ENCODE measurements at regions of chr14 and their contacts with region 1.

Region 1: DNA sequence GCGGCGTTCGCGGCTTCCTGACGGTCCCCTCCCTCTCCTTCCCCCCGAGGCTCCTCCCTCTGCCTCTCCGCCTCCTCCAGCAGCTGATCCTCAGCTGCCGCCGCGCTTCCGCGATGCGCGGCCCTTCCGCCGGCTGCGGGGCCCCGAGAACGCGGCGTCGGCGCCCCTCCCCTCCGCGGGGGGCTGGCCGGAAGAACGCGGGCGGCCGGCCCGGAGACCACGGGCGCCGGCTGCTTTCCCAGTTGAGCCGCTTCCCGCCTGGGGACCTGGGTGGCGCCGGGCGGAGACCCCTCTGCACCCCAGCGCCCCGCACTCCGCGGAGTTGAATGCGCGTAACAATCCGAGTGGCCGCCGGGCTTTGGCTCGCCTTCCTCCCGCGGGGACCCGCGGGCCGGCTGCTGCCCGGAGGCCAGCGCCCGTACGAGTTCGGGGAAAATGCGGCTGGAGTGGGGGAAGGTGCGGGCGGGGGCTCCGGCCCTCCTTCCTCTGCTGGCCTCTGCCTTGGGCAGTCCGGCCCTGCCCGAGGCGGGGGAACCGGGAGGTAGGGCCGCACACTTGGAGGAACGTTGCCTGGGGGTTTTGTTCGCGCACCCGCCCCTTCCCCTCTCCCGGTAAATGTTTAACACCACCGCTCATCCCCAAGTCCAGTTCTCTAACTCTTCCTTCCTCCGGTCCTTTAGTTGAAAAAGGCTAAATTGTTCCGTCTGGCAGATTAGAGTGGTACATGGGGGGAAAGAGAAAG is 383 bp upstream of the DCAF5 start:
- DNase-seq: peak; percentile 76 to 96 (median 91)
- ATAC-seq: peak; percentile 94
- H3K4me3 ChIP-seq: peak overlapping the region; percentile 83
- H3K4me3 Mint-ChIP-seq: peak overlapping the region; percentile 89 to 100 (median 97)
- H3K27ac ChIP-seq: peak overlapping the region; percentile 90
- H3K27ac Mint-ChIP-seq: peak overlapping the region; percentile 84 to 98 (median 93)
- H3K4me1 ChIP-seq: peaks cover 11 to 12% of the 10 kb centered on the region in 2 donors
- H3K4me1 Mint-ChIP-seq: peaks cover 30 to 37% (median 36%) of the 10 kb centered on the region in 7 donors
- H3K27me3 ChIP-seq: no peaks in the 10 kb centered on the region
- H3K27me3 Mint-ChIP-seq: peaks cover 0 to 36% (median 0%) of the 10 kb centered on the region in 5 donors

Region 2: DNA sequence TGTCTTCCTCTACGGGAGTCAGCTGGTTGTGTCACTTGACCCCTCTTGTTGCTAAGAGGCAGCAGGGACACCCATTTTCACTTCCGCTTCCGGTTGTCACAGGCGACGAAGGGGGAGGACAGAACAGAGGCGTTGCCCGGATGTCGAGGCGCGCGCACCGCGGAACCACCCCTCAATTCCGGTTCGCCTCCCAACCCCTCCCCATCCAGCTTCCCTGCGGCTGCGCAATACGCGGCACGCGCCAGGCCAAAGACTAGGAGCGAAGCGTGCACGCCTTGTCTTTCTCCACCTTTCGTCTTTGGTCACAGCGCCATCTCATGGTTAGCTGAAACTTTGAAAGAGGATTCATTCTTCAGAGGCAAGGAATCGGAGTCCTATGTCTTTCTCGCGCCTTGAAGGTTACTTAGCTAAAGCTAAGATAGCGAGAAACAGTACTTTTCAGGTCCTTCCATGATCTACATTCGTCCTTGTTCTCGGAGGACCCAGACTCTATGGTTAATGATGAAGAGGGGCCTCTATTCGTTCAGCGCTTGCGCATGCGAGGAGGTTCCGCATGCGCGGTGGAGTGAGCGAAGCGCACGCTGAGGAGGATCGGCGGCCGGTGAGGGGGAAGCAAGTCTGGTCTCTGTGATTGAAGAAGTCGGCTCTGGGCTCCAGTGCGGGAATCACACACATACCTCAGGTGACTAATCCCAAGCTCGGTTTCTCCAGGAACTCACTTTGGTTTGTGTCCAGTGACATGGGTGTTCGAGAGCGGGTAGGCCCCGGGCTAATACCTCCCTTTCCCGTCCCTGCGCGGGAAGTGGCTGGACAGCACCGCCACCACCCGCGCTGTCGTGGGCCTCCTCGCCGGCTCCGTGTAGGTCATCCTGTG is 1793.3 kb before region 1 on chr14 and contains the starts of genes ATP6V1D and EIF2S1:
- CTCF ChIA-PET with region 1: no interaction called
- POLR2A ChIA-PET with region 1: no interaction called
- intact Hi-C with region 1: loop called in 1 of 2 experiments (anchors 2 kb)
- DNase-seq: peak; percentile 97 to 100 (median 100)
- ATAC-seq: peak; percentile 94
- H3K4me3 ChIP-seq: peak within 1 kb of the TSS; percentile 87
- H3K4me3 Mint-ChIP-seq: peak within 1 kb of the TSS; percentile 93 to 99 (median 98)
- H3K27ac ChIP-seq: peak within 1 kb of the TSS; percentile 82
- H3K27ac Mint-ChIP-seq: peak within 1 kb of the TSS; percentile 94 to 99 (median 96)
- H3K4me1 ChIP-seq: peaks cover 24 to 38% of the 10 kb centered on the region in 2 donors
- H3K4me1 Mint-ChIP-seq: peaks cover 43 to 94% (median 85%) of the 10 kb centered on the region in 7 donors
- H3K27me3 ChIP-seq: no peaks in the 10 kb centered on the region
- H3K27me3 Mint-ChIP-seq: peaks cover 0 to 5% (median 0%) of the 10 kb centered on the region in 5 donors
- total RNA-seq, gene ATP6V1D: 28.5 to 41.5 (median 33.4) TPM
- total RNA-seq, gene EIF2S1: 41.4 to 115 (median 49.4) TPM

Region 3: DNA sequence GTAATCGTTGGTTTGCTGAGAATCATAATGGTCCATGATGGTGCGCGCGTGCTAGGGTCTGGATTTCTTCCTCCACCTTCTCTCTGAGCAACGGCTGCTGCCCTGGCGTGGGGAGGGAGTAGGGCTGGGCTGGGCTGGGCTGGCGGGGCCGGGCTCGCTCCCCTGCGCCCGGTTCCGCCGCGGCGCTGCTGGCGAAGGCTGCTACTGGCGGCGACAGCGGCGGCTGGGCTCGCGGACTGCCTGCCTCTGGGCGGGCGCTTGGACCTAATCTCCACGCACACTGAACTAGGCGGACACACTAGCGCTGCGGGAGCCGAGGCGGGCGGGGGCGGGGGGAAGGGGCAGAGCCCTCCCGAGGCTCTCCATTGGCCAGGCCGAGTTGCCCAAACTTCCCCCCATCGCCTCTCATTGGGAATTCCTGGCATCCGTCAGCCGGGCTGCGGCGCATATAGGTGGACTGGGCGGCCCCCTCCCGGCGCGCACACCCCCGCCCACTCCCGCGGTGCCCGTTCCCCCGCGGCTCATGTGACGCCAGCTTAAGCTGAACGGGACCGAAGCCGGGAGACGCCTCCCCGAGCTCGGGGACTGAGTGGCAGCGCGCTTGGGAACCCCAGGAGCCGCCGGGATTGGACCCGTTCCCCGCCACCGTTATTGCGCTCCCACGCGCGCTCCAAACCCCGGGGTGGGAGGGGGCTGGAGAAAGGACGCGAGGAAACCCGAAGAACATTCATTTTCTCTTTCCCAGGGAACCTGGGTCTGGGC is 174.1 kb before region 1 on chr14 and contains the start of gene ACTN1:
- CTCF ChIA-PET with region 1: no interaction called
- POLR2A ChIA-PET with region 1: no interaction called
- intact Hi-C with region 1: loop called (anchors 5 kb)
- DNase-seq: peak; percentile 46 to 74 (median 70)
- ATAC-seq: peak; percentile 81
- H3K4me3 ChIP-seq: peak within 1 kb of the TSS; percentile 83
- H3K4me3 Mint-ChIP-seq: peak within 1 kb of the TSS; percentile 75 to 98 (median 94)
- H3K27ac ChIP-seq: peak within 1 kb of the TSS; percentile 87
- H3K27ac Mint-ChIP-seq: peak within 1 kb of the TSS; percentile 81 to 100 (median 98)
- H3K4me1 ChIP-seq: peaks cover 5 to 33% of the 10 kb centered on the region in 2 donors
- H3K4me1 Mint-ChIP-seq: peaks cover 29 to 59% (median 47%) of the 10 kb centered on the region in 7 donors
- H3K27me3 ChIP-seq: no peaks in the 10 kb centered on the region
- H3K27me3 Mint-ChIP-seq: peaks cover 0 to 36% (median 0%) of the 10 kb centered on the region in 5 donors
- total RNA-seq, gene ACTN1: 41.3 to 249 (median 227) TPM

Region 4: DNA sequence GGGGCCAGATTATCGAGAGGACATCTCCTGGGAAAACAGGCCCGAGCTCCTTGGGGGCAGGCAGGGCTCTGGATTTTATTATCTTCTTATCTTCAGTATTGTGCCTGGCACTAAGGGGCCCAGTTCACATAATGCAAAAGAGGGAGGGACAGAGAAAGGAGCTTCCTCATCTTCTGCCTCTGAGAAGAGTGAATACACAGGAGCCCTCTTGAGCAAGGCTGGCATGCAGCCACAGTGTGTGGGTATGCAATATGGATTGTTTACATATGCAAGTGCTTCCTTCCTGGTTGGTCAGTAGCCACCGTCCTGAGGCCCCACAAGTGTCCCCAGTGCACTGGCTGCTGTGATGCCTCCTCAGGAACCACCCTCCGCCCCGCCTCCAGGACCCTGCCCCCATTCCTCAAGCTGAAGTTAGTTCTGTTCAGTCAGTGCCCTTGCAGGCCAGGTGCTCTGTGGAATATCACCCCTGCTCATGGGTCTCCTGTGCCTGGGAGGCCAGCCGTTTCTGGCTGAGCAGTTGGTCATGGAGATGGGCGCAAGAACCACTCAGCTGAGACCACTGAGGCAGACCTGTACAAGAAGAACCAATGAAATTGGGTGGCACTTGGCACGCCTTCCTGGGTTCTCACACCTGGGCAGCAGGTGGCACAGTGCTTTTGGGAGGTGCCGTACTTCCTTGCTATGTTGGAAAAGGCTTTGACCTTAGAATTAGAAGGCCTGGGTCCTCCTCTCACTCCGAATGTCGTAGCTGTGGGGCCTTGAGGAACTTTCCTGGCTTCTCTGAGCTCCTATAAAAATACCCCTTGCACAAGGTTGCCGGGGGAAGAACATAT is 139.1 kb before region 1 on chr14:
- CTCF ChIA-PET with region 1: no interaction called
- POLR2A ChIA-PET with region 1: no interaction called
- intact Hi-C with region 1: no loop called
- DNase-seq: no peak
- ATAC-seq: peak; percentile 90
- H3K4me3 ChIP-seq: no peak overlapping the region
- H3K4me3 Mint-ChIP-seq: no peak overlapping the region
- H3K27ac ChIP-seq: no peak overlapping the region
- H3K27ac Mint-ChIP-seq: no peak overlapping the region
- H3K4me1 ChIP-seq: peaks cover 0 to 3% of the 10 kb centered on the region in 2 donors
- H3K4me1 Mint-ChIP-seq: peaks cover 0 to 16% (median 12%) of the 10 kb centered on the region in 7 donors
- H3K27me3 ChIP-seq: no peaks in the 10 kb centered on the region
- H3K27me3 Mint-ChIP-seq: peaks cover 0 to 3% (median 0%) of the 10 kb centered on the region in 5 donors

Region 5: DNA sequence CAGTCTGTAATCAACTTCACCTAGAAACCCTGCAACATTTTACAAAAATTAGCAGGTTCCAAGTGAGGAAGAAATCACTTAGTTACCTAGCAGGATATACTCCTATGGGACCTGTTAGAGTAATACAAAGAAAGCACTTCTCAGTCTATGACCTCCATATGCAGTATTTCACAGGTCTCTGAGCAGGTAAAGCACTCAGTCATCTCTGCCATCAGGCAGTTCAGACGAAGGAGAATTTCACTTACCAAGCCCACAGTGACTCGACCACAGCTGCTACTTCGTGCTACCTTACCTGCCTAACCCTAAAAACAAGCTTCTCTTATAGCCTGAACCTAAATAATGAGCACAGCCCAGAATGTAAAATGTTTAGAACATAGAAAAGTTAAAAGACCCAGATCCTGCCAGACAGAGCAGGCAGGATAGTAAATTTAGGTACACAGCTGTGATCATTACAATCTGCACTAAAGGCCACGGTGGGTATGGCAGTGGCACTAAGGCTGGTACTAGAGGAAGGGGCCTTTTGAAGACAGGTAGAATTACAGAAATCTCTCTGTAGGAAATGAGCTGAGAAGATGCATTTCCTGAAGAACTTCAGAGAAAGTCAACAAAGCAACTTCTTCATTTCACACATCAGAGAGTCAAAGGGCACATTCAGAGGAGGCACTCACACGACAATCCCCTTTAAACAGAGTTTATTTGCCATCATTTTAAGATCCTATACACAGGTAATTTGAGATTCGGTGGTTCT is 36.1 kb before region 1 on chr14:
- CTCF ChIA-PET with region 1: no interaction called
- POLR2A ChIA-PET with region 1: no interaction called
- intact Hi-C with region 1: no loop called
- DNase-seq: peak in 6 of 9 donors; percentile 38 to 70 (median 56)
- ATAC-seq: peak; percentile 83
- H3K4me3 ChIP-seq: no peak overlapping the region
- H3K4me3 Mint-ChIP-seq: peak overlapping the region; percentile 13 to 69 (median 44)
- H3K27ac ChIP-seq: peak overlapping the region; percentile 42
- H3K27ac Mint-ChIP-seq: peak overlapping the region; percentile 51 to 92 (median 83)
- H3K4me1 ChIP-seq: peaks cover 0 to 24% of the 10 kb centered on the region in 2 donors
- H3K4me1 Mint-ChIP-seq: peaks cover 28 to 69% (median 59%) of the 10 kb centered on the region in 7 donors
- H3K27me3 ChIP-seq: no peaks in the 10 kb centered on the region
- H3K27me3 Mint-ChIP-seq: no peaks in the 10 kb centered on the region

Region 6: GRCh38 chr14:69191340-69192111 is 38.2 kb after region 1 on chr14 and contains the start of gene EXD2:
- CTCF ChIA-PET with region 1: interaction called, 8 read pairs
- POLR2A ChIA-PET with region 1: interaction called, 37 read pairs
- intact Hi-C with region 1: loop called (anchors 1 kb)
- DNase-seq: peak; percentile 27 to 68 (median 61)
- ATAC-seq: peak; percentile 81
- H3K4me3 ChIP-seq: peak within 1 kb of the TSS; percentile 71
- H3K4me3 Mint-ChIP-seq: peak within 1 kb of the TSS; percentile 91 to 97 (median 94)
- H3K27ac ChIP-seq: peak within 1 kb of the TSS; percentile 70
- H3K27ac Mint-ChIP-seq: peak within 1 kb of the TSS; percentile 80 to 96 (median 92)
- H3K4me1 ChIP-seq: peaks cover 0 to 6% of the 10 kb centered on the region in 2 donors
- H3K4me1 Mint-ChIP-seq: peaks cover 16 to 44% (median 38%) of the 10 kb centered on the region in 7 donors
- H3K27me3 ChIP-seq: no peaks in the 10 kb centered on the region
- H3K27me3 Mint-ChIP-seq: peaks cover 0 to 14% (median 0%) of the 10 kb centered on the region in 5 donors
- total RNA-seq, gene EXD2: 4.8 to 17.2 (median 10.6) TPM

Region 7: DNA sequence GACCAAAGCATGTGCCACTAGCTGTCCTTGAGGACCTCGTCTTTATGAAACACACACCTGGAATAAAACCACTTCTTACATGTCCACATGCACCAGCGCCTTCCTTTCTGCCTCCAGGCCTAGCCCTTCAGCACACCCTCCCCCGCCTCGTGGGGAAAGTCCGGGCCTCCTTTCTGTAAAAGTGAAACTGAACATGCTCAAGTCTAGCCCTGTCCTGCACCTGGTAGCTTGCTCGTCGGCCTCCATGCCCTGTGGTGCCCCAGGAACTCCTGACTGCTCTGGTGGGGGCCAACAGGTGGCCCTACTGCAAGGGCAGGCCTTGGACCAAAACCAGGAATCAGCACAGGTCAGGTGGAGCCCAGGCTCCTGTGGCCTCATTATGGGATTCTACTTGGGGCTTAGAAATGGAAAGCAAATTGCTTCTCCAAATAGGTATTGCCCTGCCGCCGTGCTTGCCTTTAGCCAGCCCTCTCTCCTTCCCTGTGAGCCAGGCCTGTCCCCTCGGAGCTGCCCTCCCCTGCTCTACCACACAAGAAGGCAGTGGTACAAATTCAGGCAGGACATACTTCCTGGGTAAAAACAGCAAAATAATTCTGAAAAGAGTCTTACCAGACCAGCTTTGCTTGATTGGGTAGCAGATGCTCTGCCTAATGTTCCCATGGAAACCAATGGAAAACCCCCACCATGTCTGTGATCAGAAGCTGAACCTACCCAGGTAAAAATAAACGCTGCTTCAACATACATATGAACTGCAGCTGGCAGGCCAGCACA is 201.3 kb after region 1 on chr14:
- CTCF ChIA-PET with region 1: no interaction called
- POLR2A ChIA-PET with region 1: no interaction called
- intact Hi-C with region 1: no loop called
- DNase-seq: peak in 5 of 9 donors; percentile 11 to 72 (median 29)
- ATAC-seq: peak; percentile 83
- H3K4me3 ChIP-seq: peak overlapping the region; percentile 22
- H3K4me3 Mint-ChIP-seq: peak overlapping the region in 8 of 10 donors; percentile 10 to 87 (median 68)
- H3K27ac ChIP-seq: no peak overlapping the region
- H3K27ac Mint-ChIP-seq: peak overlapping the region; percentile 23 to 98 (median 74)
- H3K4me1 ChIP-seq: peaks cover 4 to 9% of the 10 kb centered on the region in 2 donors
- H3K4me1 Mint-ChIP-seq: peaks cover 6 to 27% (median 9%) of the 10 kb centered on the region in 7 donors
- H3K27me3 ChIP-seq: no peaks in the 10 kb centered on the region
- H3K27me3 Mint-ChIP-seq: peaks cover 0 to 14% (median 0%) of the 10 kb centered on the region in 5 donors

Region 8: DNA sequence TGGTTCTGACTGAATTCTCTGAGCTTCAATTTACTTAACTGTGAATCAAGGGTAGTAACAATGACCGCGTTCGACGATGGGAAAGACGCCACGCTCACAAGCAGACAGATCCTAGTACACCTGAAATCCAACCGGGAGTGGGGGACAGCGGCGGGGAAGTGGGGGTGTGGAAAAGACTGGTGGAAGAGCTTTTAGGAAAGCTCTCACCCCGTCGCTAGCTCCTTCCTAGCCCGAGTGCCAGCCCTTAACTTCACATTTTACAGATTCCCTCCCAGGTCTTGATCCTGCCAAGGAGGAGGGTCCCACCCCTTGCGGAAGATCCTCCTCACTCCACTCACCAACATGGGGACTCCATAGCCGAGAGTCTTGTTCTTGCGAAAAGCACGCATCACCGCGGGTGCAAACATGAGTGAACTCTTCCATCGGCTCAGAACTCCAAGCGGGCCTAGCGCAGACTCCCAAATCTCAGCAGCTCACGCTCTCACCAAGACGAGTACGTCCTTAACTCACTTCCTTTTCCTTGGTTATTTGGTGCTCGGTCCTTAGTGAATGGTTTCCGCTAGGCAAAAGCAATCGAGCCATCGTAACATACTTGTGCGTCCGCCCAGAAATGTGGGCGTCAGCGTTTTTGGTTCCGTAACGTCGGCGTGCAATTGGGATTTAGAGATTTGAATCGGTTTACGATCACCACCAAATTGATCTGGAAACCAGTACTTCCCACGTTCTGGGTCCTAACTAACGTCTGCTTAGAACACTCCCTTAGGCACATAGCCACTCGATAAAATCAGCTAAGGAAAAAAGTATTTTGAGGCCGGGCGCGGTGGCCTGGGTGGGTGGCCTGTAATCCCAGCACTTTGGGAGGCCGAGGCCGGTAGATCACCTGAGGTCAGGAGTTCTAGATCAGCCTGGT is 1206.1 kb after region 1 on chr14 and contains the start of gene COX16:
- CTCF ChIA-PET with region 1: no interaction called
- POLR2A ChIA-PET with region 1: no interaction called
- intact Hi-C with region 1: loop called in 1 of 2 experiments (anchors 1 kb)
- DNase-seq: peak; percentile 45 to 84 (median 81)
- ATAC-seq: peak; percentile 99
- H3K4me3 ChIP-seq: peak within 1 kb of the TSS; percentile 73
- H3K4me3 Mint-ChIP-seq: peak within 1 kb of the TSS; percentile 97 to 100 (median 99)
- H3K27ac ChIP-seq: peak within 1 kb of the TSS; percentile 82
- H3K27ac Mint-ChIP-seq: peak within 1 kb of the TSS; percentile 87 to 98 (median 94)
- H3K4me1 ChIP-seq: peaks cover 3 to 26% of the 10 kb centered on the region in 2 donors
- H3K4me1 Mint-ChIP-seq: peaks cover 32 to 58% (median 52%) of the 10 kb centered on the region in 7 donors
- H3K27me3 ChIP-seq: no peaks in the 10 kb centered on the region
- H3K27me3 Mint-ChIP-seq: peaks cover 0 to 12% (median 0%) of the 10 kb centered on the region in 5 donors
- total RNA-seq, gene COX16: 11.8 to 57.0 (median 19.5) TPM